ENCODE measurements at regions of chr21 and their contacts with region 1.

Region 1: DNA sequence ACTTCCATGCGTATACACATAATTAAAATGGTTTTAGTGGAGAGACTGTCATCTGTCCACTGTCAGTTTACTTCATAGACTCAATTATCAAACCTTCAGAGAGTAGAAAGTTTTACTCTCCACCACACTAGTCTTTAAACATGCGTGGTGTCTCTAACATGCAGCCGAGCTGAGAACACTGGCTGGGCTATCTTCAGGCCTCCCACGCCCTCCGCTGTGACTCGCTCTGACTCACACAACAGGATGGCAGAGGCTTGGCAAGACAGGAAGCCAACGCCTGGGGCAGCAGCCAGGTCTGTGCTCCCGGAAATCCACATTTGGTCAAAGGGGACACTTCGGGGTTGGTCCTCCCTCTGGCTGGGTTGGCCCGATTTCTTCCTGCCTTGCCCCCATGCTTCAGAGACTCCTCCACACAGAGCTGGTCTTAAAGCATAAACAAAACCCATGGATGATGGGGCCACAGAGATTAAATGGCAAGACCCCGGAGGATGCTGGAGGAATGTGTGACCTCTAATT is 22.7 kb upstream of the IFNGR2 start:
- DNase-seq: peak; percentile 98
- H3K4me3 Mint-ChIP-seq: peak overlapping the region; percentile 39
- H3K27ac Mint-ChIP-seq: peak overlapping the region; percentile 71
- H3K4me1 Mint-ChIP-seq: peaks cover 63% of the 10 kb centered on the region
- H3K27me3 Mint-ChIP-seq: peaks cover under 1% of the 10 kb centered on the region

Region 2: GRCh38 chr21:32770871-32771523 is 609.5 kb before region 1 on chr21:
- CTCF ChIA-PET with region 1: no interaction called
- intact Hi-C with region 1: loop called (anchors 1 kb)
- DNase-seq: peak; percentile 67
- H3K4me3 Mint-ChIP-seq: peak overlapping the region; percentile 92
- H3K27ac Mint-ChIP-seq: peak overlapping the region; percentile 89
- H3K4me1 Mint-ChIP-seq: peaks cover 54% of the 10 kb centered on the region
- H3K27me3 Mint-ChIP-seq: no peaks in the 10 kb centered on the region

Region 3: GRCh38 chr21:33229784-33230544 is 150.6 kb before region 1 on chr21 and contains the start of gene IFNAR2:
- CTCF ChIA-PET with region 1: no interaction called
- intact Hi-C with region 1: loop called (anchors 1 kb)
- DNase-seq: peak; percentile 73
- H3K4me3 Mint-ChIP-seq: peak within 1 kb of the TSS; percentile 89
- H3K27ac Mint-ChIP-seq: peak within 1 kb of the TSS; percentile 92
- H3K4me1 Mint-ChIP-seq: peaks cover 52% of the 10 kb centered on the region
- H3K27me3 Mint-ChIP-seq: no peaks in the 10 kb centered on the region
- total RNA-seq, gene IFNAR2: 16.6 to 19.4 TPM

Region 4: GRCh38 chr21:33266050-33266788 is 114.3 kb before region 1 on chr21 and contains the start of gene IL10RB:
- CTCF ChIA-PET with region 1: no interaction called
- intact Hi-C with region 1: loop called (anchors 2 kb)
- DNase-seq: peak; percentile 65
- H3K4me3 Mint-ChIP-seq: peak within 1 kb of the TSS; percentile 99
- H3K27ac Mint-ChIP-seq: peak within 1 kb of the TSS; percentile 95
- H3K4me1 Mint-ChIP-seq: peaks cover 49% of the 10 kb centered on the region
- H3K27me3 Mint-ChIP-seq: no peaks in the 10 kb centered on the region
- total RNA-seq, gene IL10RB: 23.9 TPM

Region 5: DNA sequence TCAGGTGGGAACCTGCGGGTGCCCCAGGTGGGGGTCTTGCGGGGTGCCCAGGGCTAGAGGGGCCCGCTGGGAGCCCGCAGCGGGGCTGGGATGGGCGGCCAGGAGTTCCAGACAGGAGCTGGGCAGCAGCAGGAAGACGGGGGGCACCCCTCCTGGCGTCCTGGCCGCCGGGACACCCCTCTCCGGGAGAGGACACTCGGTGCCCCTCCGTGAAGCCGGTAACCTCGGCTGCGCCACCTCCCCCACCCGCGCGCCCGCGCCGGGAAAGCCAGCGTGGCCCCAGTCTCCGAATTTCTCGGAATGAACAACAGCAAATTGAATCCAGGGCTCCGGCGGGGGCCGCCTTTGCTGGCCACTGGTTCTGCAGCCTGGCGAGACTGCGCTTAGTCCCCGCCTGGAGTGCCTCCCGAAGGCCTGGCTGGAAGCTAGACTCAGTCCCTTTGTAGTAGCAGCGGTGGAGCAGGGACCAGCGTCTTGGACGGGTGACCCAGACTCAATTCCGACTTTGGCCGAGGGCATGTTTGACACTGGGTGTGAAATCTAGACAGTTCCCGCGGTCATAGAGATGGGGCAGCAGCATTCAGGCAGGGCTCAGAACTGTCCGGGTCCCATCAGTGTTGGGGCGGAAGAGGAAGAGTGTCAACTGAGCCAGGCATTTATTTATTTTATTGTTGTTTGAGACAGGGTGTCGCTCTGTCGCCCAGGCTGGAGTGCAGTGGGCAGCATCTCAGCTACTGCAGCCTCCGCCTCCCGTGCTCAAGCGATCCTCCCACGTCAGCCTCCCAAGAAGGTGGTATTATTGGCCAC is 23.4 kb after region 1 on chr21:
- CTCF ChIA-PET with region 1: interaction called, 11 read pairs
- intact Hi-C with region 1: loop called (anchors 1 kb)
- DNase-seq: peak; percentile 53
- H3K4me3 Mint-ChIP-seq: peak overlapping the region; percentile 84
- H3K27ac Mint-ChIP-seq: peak overlapping the region; percentile 84
- H3K4me1 Mint-ChIP-seq: peaks cover 38% of the 10 kb centered on the region
- H3K27me3 Mint-ChIP-seq: peaks cover 2% of the 10 kb centered on the region

Region 6: DNA sequence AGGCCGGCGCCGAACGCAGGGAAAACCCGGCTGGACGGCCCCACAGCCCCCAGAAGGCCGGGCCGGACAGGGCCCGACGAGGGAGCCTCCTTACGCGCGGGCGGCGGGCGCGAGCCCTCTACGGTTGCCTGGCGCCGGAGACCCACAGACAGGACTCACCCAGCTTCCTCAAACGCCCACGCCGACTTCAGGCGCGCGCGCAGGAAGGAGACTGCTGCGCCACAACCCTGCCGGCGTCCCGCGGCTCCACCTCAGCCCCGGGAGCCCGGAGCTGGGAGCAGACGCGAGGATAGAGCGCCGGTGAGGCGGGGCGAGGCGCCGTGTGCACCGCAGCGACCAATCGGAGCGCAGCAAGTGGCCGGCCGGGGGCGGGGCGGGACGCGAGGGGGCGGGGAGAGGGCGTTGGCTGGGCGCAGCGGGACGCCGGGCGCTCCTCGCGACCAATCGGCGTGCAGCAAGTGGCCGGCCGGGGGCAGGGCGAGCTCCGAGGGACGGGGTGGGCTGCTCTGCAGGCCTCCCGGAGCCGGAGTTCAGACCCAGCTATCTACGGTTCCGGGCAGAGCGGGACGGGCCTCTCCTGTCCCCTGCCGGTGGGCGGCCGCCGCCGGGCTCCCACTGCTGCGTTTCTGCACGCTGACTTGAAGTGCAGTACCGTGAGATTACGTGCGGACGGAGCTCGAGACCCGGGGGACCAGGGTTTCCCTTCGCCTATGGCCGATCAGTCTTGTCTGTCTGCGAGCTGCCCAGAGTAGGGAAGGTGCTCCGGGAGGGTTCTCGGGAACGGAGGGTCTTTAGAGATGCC is 99.3 kb after region 1 on chr21 and contains the start of gene TMEM50B:
- CTCF ChIA-PET with region 1: no interaction called
- intact Hi-C with region 1: loop called (anchors 1 kb)
- DNase-seq: peak; percentile 96
- H3K4me3 Mint-ChIP-seq: peak within 1 kb of the TSS; percentile 89
- H3K27ac Mint-ChIP-seq: peak within 1 kb of the TSS; percentile 68
- H3K4me1 Mint-ChIP-seq: peaks cover 15% of the 10 kb centered on the region
- H3K27me3 Mint-ChIP-seq: no peaks in the 10 kb centered on the region
- total RNA-seq, gene TMEM50B: 17.8 to 18.2 TPM

Region 7: GRCh38 chr21:33608559-33608958 is 228.0 kb after region 1 on chr21:
- CTCF ChIA-PET with region 1: no interaction called
- intact Hi-C with region 1: loop called (anchors 5 kb)
- DNase-seq: no peak
- H3K4me3 Mint-ChIP-seq: no peak overlapping the region
- H3K27ac Mint-ChIP-seq: peak overlapping the region; percentile 1
- H3K4me1 Mint-ChIP-seq: no peaks in the 10 kb centered on the region
- H3K27me3 Mint-ChIP-seq: no peaks in the 10 kb centered on the region

Measured in activated naive CD4-positive, alpha-beta T cell treated with anti-CD3 and anti-CD28 coated beads for 36 hours (primary cell).